ENCODE measurements at regions of chr6 and their contacts with region 1.

Region 1: GRCh38 chr6:138692058-138692977 is 81.3 kb upstream of the CCDC28A start:
- H3K4me3 Mint-ChIP-seq: peak overlapping the region; percentile 99
- H3K27ac Mint-ChIP-seq: peak overlapping the region; percentile 92
- H3K4me1 Mint-ChIP-seq: peaks cover 18% of the 10 kb centered on the region
- H3K27me3 Mint-ChIP-seq: peaks cover 27% of the 10 kb centered on the region

Region 2: DNA sequence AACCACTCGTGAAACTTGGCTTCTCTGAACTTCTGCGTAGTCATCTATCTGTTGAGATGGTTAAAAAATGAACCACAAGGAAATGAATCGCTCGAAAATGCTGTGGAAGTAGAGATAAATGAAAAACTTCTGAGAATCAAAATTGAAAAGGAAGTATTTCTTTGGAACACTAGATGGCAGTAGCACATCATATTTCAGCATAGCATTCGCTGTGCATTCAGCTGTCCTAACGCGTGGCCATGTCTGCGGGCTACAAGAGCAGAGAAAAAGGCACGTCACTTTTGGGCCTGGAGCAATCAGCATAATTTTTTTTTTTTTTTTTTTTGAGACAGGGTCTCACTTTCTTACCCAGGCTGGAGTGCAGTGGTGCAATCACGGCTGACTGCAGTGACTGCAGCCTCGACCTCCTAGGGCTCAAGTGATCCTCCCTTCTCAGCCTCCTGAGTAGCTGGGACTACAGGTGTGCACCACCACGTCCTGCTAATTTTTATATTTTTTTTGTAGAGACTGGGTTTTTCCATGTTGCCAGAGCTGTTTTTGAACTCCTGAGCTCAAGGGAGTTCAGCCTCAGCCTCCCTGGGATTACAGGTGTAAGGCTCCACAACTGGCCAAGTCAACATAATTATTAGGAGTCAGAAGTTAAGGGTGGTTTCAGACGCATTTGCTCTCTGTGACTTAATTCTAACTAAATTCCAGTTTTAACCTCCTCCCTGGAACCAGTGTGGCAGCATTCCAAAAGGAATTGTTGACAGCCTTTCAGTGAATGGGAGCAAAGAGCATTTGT is 576.2 kb before region 1 on chr6:
- intact Hi-C with region 1: loop called (anchors 10 kb)
- H3K4me3 Mint-ChIP-seq: no peak overlapping the region
- H3K27ac Mint-ChIP-seq: no peak overlapping the region
- H3K4me1 Mint-ChIP-seq: peaks cover 7% of the 10 kb centered on the region
- H3K27me3 Mint-ChIP-seq: peaks cover 26% of the 10 kb centered on the region

Region 3: GRCh38 chr6:138588805-138589434 is 103.4 kb before region 1 on chr6:
- intact Hi-C with region 1: loop called (anchors 2 kb)
- H3K4me3 Mint-ChIP-seq: no peak overlapping the region
- H3K27ac Mint-ChIP-seq: no peak overlapping the region
- H3K4me1 Mint-ChIP-seq: peaks cover 42% of the 10 kb centered on the region
- H3K27me3 Mint-ChIP-seq: peaks cover 13% of the 10 kb centered on the region

Region 4: DNA sequence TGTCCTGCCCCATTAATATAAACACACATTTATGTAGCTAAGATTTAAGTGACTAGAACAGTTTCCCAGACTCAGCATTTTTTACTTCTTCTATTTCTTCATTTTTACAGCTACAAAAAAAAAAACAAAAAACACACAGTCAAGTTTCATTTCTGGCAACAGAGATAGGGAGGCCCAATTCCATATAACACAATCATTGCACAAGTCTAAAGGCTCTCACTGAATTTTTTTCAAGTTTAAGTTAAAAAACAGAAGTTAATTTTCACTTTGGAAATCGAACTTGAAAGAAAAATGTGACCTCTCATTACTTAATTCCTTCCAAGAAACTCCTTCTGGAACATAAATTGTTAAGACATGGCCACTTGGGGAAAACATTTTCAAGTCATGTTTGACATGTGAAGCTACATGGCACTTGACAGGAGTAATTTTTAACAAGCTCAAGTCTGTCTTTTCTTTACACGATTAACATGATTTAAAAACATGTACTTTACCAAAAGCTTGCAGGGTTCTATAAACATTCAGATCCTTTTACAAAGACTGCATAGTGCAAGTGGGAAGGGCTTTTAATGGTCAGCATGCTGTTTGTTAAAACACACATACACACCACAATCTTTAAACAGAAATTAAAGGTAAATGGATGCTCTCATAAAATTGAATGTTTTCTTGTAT is 18.8 kb before region 1 on chr6:
- intact Hi-C with region 1: loop called (anchors 2 kb)
- H3K4me3 Mint-ChIP-seq: peak overlapping the region; percentile 23
- H3K27ac Mint-ChIP-seq: peak overlapping the region; percentile 84
- H3K4me1 Mint-ChIP-seq: peaks cover 59% of the 10 kb centered on the region
- H3K27me3 Mint-ChIP-seq: no peaks in the 10 kb centered on the region

Region 5: GRCh38 chr6:138773177-138774091 is 81.1 kb after region 1 on chr6 and contains the start of gene CCDC28A:
- intact Hi-C with region 1: loop called (anchors 2 kb)
- H3K4me3 Mint-ChIP-seq: peak within 1 kb of the TSS; percentile 100
- H3K27ac Mint-ChIP-seq: peak within 1 kb of the TSS; percentile 100
- H3K4me1 Mint-ChIP-seq: peaks cover 13% of the 10 kb centered on the region
- H3K27me3 Mint-ChIP-seq: no peaks in the 10 kb centered on the region

Region 6: GRCh38 chr6:138987640-138988468 is 295.5 kb after region 1 on chr6 and contains the start of gene REPS1:
- intact Hi-C with region 1: loop called (anchors 10 kb)
- H3K4me3 Mint-ChIP-seq: peak within 1 kb of the TSS; percentile 88
- H3K27ac Mint-ChIP-seq: peak within 1 kb of the TSS; percentile 96
- H3K4me1 Mint-ChIP-seq: peaks cover 36% of the 10 kb centered on the region
- H3K27me3 Mint-ChIP-seq: no peaks in the 10 kb centered on the region